ENCODE measurements at regions of chr3 and their contacts with region 1.

Region 1: DNA sequence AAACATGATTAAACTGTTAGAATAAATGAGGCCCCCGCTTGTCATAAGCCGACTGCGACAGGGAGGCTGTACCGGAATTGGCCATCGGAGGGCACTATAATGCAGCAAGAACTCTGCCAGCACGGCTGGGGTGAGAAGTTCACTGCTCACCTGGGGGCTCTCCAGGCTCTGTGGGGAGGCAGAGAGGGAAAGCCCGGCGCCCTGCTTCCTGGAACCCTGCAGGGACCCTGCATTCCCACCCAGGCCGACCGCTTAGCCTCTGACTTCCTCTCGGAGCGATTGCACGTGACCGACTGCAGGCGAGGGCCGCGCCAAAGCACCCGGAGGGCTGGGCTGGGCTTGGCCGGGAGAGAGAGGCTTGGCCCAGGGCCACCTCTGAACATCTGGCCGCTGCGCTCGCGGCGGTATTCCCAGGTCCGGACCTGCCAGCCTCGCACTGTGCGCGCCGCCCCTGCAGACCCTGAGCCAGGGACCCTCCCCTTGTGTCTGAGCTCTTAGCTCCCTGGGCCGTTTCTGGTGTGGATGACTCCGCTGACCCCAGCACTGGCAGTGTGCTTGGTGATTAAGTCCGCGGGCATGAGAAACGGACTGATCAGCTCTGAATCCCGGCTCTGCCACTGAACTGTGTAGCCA is 26.2 kb downstream of the DRD3 start:
- DNase-seq: peak; percentile 84
- H3K4me3 Mint-ChIP-seq: peak overlapping the region; percentile 25
- H3K27ac Mint-ChIP-seq: no peak overlapping the region
- H3K4me1 Mint-ChIP-seq: peaks cover 5% of the 10 kb centered on the region
- H3K27me3 Mint-ChIP-seq: peaks cover 9% of the 10 kb centered on the region

Region 2: DNA sequence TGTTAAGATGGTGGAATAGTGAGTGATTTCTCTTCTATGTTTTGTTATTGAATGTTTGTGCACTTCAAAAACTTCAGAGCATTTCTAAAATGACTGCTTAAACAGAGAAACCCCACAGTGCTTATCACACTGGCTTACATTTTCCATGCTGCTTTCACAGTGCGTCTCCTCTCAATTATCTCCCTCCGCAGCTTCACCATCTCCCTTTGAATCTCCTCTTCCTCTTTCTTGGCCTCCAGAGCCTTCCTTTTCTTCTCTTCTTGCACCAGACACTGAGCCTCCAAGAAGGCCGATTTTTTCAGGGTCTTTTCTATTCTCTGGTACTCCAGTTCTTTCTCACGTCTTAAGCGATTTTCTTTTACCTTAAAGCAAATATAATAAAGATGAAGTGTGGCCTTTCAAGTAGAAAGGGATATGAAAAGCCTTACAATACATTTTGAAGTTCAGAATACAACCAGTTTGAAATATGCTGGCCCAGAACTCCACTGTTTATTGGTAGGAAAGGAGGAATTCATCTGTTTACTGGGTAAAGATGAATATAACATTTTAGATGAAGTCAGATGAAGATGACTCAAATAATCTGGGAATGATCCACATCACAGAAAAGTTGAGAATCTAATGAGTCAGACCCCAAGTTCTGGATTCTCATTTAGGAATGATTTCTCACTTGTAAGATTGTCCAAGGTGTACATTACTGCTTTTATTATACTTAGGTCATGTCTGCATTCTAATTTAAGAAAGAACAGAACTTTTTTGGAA is 117.7 kb before region 1 on chr3:
- CTCF ChIA-PET with region 1: no interaction called
- DNase-seq: no peak
- H3K4me3 Mint-ChIP-seq: no peak overlapping the region
- H3K27ac Mint-ChIP-seq: no peak overlapping the region
- H3K4me1 Mint-ChIP-seq: no peaks in the 10 kb centered on the region
- H3K27me3 Mint-ChIP-seq: no peaks in the 10 kb centered on the region

Region 3: GRCh38 chr3:114133947-114134346 is 18.7 kb before region 1 on chr3:
- CTCF ChIA-PET with region 1: no interaction called
- DNase-seq: no peak
- H3K4me3 Mint-ChIP-seq: no peak overlapping the region
- H3K27ac Mint-ChIP-seq: no peak overlapping the region
- H3K4me1 Mint-ChIP-seq: no peaks in the 10 kb centered on the region
- H3K27me3 Mint-ChIP-seq: peaks cover 11% of the 10 kb centered on the region

Region 4: GRCh38 chr3:114213627-114214541 is 61.2 kb after region 1 on chr3:
- CTCF ChIA-PET with region 1: interaction called, 10 read pairs
- DNase-seq: peak; percentile 75
- H3K4me3 Mint-ChIP-seq: no peak overlapping the region
- H3K27ac Mint-ChIP-seq: no peak overlapping the region
- H3K4me1 Mint-ChIP-seq: peaks cover 2% of the 10 kb centered on the region
- H3K27me3 Mint-ChIP-seq: no peaks in the 10 kb centered on the region

Region 5: DNA sequence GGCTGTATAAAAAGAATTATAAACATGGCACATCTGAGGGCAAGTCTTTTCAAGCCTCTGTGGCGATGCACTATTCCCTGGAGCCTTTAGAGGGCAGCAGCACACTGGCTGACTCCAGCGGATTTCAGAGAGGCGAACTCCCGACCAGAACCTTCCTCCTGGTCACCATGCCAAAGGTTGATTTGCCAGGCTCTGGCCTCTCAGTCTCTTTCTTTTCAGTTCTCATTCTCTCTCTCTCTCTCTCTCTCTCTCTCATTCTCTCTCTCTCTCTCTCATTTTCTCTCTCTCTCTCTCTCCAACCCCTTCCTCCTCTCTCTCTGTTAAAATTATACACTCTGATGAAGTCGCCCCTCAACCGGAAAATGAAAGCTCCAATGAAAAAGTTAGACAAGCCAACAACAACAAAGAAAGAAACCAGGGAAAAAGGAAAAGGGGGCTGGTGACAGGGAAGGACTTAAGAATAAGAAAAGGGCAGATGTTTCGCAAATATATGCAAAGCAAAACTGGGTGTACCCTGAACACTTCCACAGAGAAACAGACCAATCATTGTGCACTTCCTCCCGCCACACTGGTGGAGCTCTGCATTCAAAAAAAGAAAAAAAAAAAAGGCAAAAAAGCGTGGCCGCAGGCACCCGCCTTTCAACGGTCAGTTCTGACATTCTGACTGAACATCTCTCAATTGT is 231.4 kb after region 1 on chr3:
- CTCF ChIA-PET with region 1: interaction called, 12 read pairs
- DNase-seq: peak; percentile 77
- H3K4me3 Mint-ChIP-seq: peak overlapping the region; percentile 40
- H3K27ac Mint-ChIP-seq: peak overlapping the region; percentile 77
- H3K4me1 Mint-ChIP-seq: peaks cover 11% of the 10 kb centered on the region
- H3K27me3 Mint-ChIP-seq: no peaks in the 10 kb centered on the region